Activated T-helper 1 cell treated with anti-CD3 and anti-CD28 coated beads, Interleukin-12 subunit alpha, Interleukin-12 subunit beta, Interleukin-2, Interleukin-4 antibody, amounts not matched to agents 30 ng/mL and 10 ng/mL and 1 ng/mL, durations not matched to agents 14 hours and 24 hours and 36 hours (primary cell): ENCODE measurements at regions of chr22 and their contacts with region 1.

Region 1: DNA sequence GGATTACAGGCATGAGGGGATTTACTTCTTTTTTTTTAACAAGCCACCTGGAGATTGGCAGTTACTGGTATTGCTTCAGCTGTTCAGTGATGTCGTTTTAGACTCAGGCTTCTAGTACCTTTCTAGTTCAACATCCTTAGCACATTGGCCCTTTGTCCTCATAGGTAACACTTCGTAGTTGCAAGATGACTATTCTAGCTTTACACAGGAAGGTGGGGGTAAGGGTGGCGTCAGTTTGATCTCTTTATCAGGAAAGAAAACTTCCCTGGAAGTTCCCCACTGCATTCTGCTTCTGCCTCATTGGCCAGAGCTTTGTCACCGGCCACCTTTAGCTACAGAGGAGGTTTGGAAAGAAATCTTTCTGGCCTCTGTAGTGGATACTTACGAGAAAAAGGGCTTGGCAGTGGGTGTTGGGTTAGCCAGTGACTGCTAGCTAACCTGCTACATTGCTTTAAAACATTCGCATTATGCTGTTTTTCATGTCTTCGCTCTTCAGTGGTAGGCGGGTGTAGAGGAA is 40.7 kb downstream of the SFI1 start:
- DNase-seq: peak; percentile 64
- H3K4me3 Mint-ChIP-seq: peak overlapping the region; percentile 80
- H3K27ac Mint-ChIP-seq: peak overlapping the region; percentile 97
- H3K4me1 Mint-ChIP-seq: peaks cover 69% of the 10 kb centered on the region
- H3K27me3 Mint-ChIP-seq: no peaks in the 10 kb centered on the region

Region 2: GRCh38 chr22:31496007-31496734 is 40.9 kb before region 1 on chr22 and contains the start of gene SFI1:
- intact Hi-C with region 1: loop called (anchors 1 kb)
- DNase-seq: peak; percentile 94
- H3K4me3 Mint-ChIP-seq: peak within 1 kb of the TSS; percentile 99
- H3K27ac Mint-ChIP-seq: peak within 1 kb of the TSS; percentile 99
- H3K4me1 Mint-ChIP-seq: peaks cover 40% of the 10 kb centered on the region
- H3K27me3 Mint-ChIP-seq: no peaks in the 10 kb centered on the region
- total RNA-seq, gene SFI1: 406 and 416 TPM in 2 replicates